ENCODE measurements at regions of chr4 and their contacts with region 1.

Region 1: GRCh38 chr4:55546756-55547465 is at the start of gene CLOCK:
- DNase-seq: peak; percentile 80
- H3K4me3 Mint-ChIP-seq: peak within 1 kb of the TSS; percentile 86
- H3K27ac Mint-ChIP-seq: peak within 1 kb of the TSS; percentile 79
- H3K4me1 Mint-ChIP-seq: peaks cover 38% of the 10 kb centered on the region
- H3K27me3 Mint-ChIP-seq: peaks cover 45% of the 10 kb centered on the region
- total RNA-seq, gene CLOCK: 7.2 and 7.4 TPM in 2 replicates

Region 2: DNA sequence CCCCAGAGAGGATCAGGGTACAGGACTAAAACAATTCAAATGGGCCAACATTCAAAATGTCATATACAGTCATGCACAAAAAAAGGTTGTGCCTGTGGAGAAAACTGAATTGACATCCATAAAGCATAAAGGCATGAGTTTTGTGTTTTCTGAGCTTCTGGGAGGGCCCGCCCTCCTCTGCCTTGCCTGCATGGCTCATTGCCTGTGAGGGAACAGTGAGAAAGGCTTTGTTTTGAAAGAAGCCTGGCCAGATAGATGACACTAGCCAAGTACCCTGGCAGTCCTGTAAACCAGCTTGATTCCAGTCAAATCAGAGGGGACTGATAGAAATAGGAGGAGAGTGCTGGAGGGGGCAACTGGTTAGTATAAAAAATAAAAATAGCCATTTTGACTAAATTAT is 694.9 kb before region 1 on chr4:
- intact Hi-C with region 1: no loop called
- DNase-seq: no peak
- H3K4me3 Mint-ChIP-seq: no peak overlapping the region
- H3K27ac Mint-ChIP-seq: no peak overlapping the region
- H3K4me1 Mint-ChIP-seq: no peaks in the 10 kb centered on the region
- H3K27me3 Mint-ChIP-seq: no peaks in the 10 kb centered on the region

Region 3: DNA sequence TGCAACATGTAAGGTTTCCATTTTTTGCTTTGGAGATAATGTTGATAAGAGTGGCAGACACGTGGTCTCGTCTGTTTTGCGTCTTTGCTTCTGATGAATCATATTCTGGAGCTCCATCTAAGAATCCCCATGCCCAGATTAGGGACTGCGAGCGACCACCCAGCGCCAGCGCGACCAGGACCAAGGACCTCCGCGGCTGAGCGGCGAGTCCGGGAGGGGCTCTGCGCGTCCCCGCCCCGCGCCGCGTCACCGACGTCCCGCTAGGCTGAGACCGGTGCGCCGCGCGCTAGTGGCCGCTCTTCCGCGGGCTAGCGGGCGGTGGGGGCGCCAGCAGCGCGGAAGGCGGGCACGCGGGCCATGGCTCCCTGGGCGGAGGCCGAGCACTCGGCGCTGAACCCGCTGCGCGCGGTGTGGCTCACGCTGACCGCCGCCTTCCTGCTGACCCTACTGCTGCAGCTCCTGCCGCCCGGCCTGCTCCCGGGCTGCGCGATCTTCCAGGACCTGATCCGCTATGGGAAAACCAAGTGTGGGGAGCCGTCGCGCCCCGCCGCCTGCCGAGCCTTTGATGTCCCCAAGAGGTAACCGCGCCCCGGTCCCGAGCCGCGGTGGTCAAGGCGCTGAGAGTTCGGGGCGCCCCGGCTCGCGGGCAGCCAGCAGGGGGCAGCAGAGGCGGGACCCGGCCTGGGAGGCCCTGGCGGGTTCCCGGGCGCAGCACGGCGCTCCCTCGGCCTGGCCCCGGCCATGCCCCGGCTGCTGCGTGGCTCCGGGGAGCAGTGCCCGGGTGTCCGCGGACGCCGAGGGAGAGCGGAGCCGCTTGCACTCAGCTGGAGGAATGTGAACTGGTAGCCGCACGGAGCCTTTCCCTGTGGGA is 200.7 kb before region 1 on chr4 and contains the start of gene SRD5A3:
- intact Hi-C with region 1: loop called (anchors 1 kb)
- DNase-seq: peak; percentile 72
- H3K4me3 Mint-ChIP-seq: peak within 1 kb of the TSS; percentile 90
- H3K27ac Mint-ChIP-seq: peak within 1 kb of the TSS; percentile 95
- H3K4me1 Mint-ChIP-seq: peaks cover 29% of the 10 kb centered on the region
- H3K27me3 Mint-ChIP-seq: no peaks in the 10 kb centered on the region
- total RNA-seq, gene SRD5A3: 32.4 and 33.5 TPM in 2 replicates

Region 4: DNA sequence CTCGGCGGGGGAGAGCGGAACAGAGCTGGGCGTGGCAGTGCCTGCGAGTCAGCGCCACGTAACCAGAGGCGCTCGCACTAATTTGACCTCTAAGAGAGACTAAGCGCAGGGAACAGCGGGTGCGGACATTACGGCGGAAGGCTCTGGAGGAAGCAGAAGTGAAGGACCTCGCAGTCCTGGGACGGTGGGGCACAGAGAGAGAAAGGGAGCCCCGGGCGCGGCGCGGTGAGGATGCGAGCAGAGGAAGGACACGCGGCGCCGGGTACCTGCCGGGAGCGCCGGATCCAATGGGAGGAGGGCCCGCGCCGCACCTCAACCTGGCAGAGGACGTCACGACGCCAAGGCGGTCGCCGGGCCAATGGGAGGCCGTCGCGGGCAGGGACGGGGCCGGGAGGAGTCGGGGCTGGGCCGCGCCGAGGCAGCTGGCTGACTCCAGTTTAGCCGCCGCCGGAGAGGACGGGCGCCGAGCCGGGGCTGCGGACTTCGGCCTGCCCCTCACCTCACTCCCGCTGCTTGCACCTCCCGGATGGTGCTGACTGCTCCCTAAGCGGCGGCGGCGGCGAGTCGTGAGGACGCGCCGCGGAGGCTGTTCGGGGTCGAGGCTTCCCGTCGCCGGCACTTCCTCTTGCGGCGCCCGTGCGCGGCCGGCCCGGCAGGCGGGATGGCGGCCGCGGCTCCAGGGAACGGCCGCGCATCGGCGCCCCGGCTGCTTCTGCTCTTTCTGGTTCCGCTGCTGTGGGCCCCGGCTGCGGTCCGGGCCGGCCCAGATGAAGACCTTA is 151.2 kb before region 1 on chr4 and contains the start of gene TMEM165:
- intact Hi-C with region 1: loop called (anchors 1 kb)
- DNase-seq: peak; percentile 86
- H3K4me3 Mint-ChIP-seq: peak within 1 kb of the TSS; percentile 98
- H3K27ac Mint-ChIP-seq: peak within 1 kb of the TSS; percentile 97
- H3K4me1 Mint-ChIP-seq: peaks cover 31% of the 10 kb centered on the region
- H3K27me3 Mint-ChIP-seq: no peaks in the 10 kb centered on the region
- total RNA-seq, gene TMEM165: 89.3 and 91.4 TPM in 2 replicates

Region 5: DNA sequence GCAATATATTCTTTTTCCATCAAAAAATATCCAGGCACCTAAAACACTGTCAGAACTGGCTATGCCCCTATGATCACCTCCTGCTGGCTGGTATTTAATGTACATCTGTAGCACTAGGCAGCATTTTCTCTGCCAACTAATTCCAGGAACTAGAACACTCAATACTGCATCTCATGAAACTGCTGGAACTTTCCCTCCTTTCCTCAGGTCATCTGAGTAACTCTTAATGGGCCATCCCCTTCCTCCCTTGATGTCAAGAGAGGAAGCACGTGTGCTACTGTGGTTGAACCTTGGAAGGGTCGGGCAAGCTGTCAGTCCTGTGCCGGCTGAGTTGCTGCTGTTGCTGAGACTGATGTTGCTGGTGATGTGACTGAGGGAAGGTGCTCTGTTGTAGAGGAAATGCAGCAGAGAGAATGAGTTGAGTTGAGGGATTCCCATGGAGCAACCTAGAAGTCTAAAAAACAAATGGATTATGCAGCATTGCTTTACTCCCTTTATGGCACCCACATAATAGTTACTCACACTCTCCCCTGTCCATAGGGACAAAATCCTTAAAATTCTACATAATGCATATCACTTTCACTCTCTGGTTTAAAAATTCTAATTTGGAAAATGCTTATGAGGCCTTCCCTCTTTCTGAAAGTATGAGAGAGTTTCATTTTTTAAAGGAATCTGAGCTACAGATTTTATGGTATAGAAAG is 111.6 kb before region 1 on chr4:
- intact Hi-C with region 1: loop called (anchors 2 kb)
- DNase-seq: no peak
- H3K4me3 Mint-ChIP-seq: no peak overlapping the region
- H3K27ac Mint-ChIP-seq: peak overlapping the region; percentile 23
- H3K4me1 Mint-ChIP-seq: peaks cover 12% of the 10 kb centered on the region
- H3K27me3 Mint-ChIP-seq: no peaks in the 10 kb centered on the region

Region 6: DNA sequence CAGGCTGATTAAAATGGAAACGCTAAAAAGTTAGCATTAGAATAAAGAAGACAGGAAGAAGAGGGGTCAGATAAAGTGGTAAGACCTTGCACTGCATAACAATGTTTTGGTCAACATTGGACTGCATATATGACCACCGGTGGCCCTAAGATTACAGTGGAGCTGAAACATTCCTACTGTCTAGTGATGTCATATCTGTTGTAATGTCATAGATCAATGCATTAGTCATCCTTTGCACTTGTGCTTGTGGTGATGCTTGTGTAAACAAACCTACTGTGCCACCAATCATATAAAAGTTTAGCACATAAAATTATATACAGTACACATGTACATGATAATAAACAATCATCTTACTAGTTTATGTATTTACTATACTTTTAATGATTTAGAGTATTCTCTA is 78.2 kb before region 1 on chr4:
- intact Hi-C with region 1: no loop called
- DNase-seq: no peak
- H3K4me3 Mint-ChIP-seq: no peak overlapping the region
- H3K27ac Mint-ChIP-seq: no peak overlapping the region
- H3K4me1 Mint-ChIP-seq: no peaks in the 10 kb centered on the region
- H3K27me3 Mint-ChIP-seq: no peaks in the 10 kb centered on the region

Region 7: DNA sequence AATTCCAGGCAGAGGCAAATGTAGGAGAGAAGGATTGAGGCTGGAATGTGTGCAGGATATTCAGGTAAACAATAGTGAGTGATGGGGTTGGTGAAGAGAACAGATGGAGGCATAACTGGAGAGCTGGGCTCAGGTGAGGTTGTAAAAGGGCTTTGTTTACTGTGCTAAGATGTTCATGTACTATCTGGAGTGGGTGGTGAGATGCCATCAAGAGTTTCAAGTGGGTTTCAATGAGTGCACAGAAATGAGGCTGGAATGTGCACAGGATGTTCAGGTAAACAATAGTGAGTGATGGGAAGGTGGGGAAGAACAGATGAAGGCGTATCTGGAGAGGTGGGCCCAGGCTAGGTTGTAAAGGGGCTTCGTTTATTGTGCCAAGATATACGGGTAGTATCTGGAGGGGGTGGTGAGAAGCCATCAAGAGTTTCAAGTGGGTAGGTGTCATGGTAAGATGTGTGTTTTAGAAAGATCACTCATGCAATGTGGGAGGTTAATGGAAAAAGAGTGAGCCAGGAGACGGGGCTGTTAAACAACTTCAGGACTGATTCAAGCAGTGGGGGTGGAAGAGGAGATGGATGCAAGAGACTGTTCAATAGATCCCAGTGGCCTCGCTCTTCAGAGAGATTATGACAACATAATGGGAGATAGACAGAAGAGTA is 114.6 kb after region 1 on chr4:
- intact Hi-C with region 1: no loop called
- DNase-seq: no peak
- H3K4me3 Mint-ChIP-seq: no peak overlapping the region
- H3K27ac Mint-ChIP-seq: no peak overlapping the region
- H3K4me1 Mint-ChIP-seq: peaks cover 4% of the 10 kb centered on the region
- H3K27me3 Mint-ChIP-seq: peaks cover 2% of the 10 kb centered on the region

Region 8: GRCh38 chr4:55853484-55854046 is 306.7 kb after region 1 on chr4 and contains the start of gene EXOC1:
- intact Hi-C with region 1: loop called (anchors 5 kb)
- DNase-seq: peak; percentile 94
- H3K4me3 Mint-ChIP-seq: peak within 1 kb of the TSS; percentile 18
- H3K27ac Mint-ChIP-seq: peak within 1 kb of the TSS; percentile 89
- H3K4me1 Mint-ChIP-seq: peaks cover 20% of the 10 kb centered on the region
- H3K27me3 Mint-ChIP-seq: no peaks in the 10 kb centered on the region
- total RNA-seq, gene EXOC1: 20.4 and 22.2 TPM in 2 replicates

Region 9: GRCh38 chr4:55866973-55867574 is 320.2 kb after region 1 on chr4:
- intact Hi-C with region 1: loop called (anchors 5 kb)
- DNase-seq: no peak
- H3K4me3 Mint-ChIP-seq: no peak overlapping the region
- H3K27ac Mint-ChIP-seq: no peak overlapping the region
- H3K4me1 Mint-ChIP-seq: peaks cover 23% of the 10 kb centered on the region
- H3K27me3 Mint-ChIP-seq: no peaks in the 10 kb centered on the region